Right cardiac atrium (tissue), 5 donors: ENCODE measurements at regions of chr10 and their contacts with region 1.

Region 1: GRCh38 chr10:92290837-92291615 is at the starts of genes CPEB3 and MARCHF5:
- DNase-seq: peak; percentile 97 to 99 (median 99)
- ATAC-seq: peak; percentile 99 to 100
- H3K4me3 ChIP-seq: peak within 1 kb of the TSS; percentile 74
- H3K27ac ChIP-seq: peak within 1 kb of the TSS; percentile 93
- H3K4me1 ChIP-seq: no peaks in the 10 kb centered on the region
- H3K27me3 ChIP-seq: no peaks in the 10 kb centered on the region
- total RNA-seq, gene CPEB3: 7.2 to 14.3 (median 12.4) TPM
- total RNA-seq, gene MARCHF5: 29.4 to 36.7 (median 32.1) TPM

Region 2: GRCh38 chr10:92240289-92241157 is 50.5 kb before region 1 on chr10:
- intact Hi-C with region 1: loop called in 2 of 4 experiments (anchors 2 to 5 kb)
- DNase-seq: peak in 2 of 3 donors; percentile 33 to 63
- ATAC-seq: peak; percentile 80 to 81
- H3K4me3 ChIP-seq: peak overlapping the region; percentile 71
- H3K27ac ChIP-seq: peak overlapping the region; percentile 84
- H3K4me1 ChIP-seq: no peaks in the 10 kb centered on the region
- H3K27me3 ChIP-seq: no peaks in the 10 kb centered on the region

Region 3: DNA sequence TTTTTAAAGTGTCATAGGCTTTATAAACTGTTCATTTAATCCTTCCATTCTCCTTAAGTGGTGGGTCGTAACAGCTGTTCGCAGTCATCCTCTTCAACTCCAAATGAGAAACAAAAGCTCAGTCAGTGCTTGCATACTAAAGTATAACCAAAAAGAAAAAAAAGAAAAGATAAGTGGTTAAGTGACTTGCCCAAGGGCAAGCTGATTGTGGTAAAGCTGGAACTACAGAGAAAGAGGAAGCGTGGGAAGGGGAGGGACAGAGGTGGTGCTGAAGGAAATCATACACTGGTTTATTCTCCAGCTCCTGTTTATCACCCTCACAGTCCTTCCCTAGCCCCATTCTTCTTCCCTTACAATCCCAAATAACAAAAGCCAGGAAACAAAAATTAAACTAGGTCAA is 253.3 kb after region 1 on chr10:
- intact Hi-C with region 1: no loop called
- DNase-seq: no peak
- ATAC-seq: peak in 1 of 2 donors; percentile 55
- H3K4me3 ChIP-seq: no peak overlapping the region
- H3K27ac ChIP-seq: no peak overlapping the region
- H3K4me1 ChIP-seq: no peaks in the 10 kb centered on the region
- H3K27me3 ChIP-seq: no peaks in the 10 kb centered on the region